ENCODE measurements at regions of chr1 and their contacts with region 1.

Region 1: GRCh38 chr1:89065079-89065868 is at the start of gene GBP1:
- DNase-seq: peak in 7 of 9 donors; percentile 34 to 56 (median 52)
- ATAC-seq: peak; percentile 88
- H3K4me3 ChIP-seq: peak within 1 kb of the TSS; percentile 56
- H3K4me3 Mint-ChIP-seq: peak within 1 kb of the TSS; percentile 89 to 97 (median 94)
- H3K27ac ChIP-seq: peak within 1 kb of the TSS; percentile 89
- H3K27ac Mint-ChIP-seq: peak within 1 kb of the TSS; percentile 90 to 98 (median 95)
- H3K4me1 ChIP-seq: peaks cover 15 to 26% of the 10 kb centered on the region in 2 donors
- H3K4me1 Mint-ChIP-seq: peaks cover 44 to 74% (median 62%) of the 10 kb centered on the region in 7 donors
- H3K27me3 ChIP-seq: no peaks in the 10 kb centered on the region
- H3K27me3 Mint-ChIP-seq: no peaks in the 10 kb centered on the region
- total RNA-seq, gene GBP1: 17.1 to 319 (median 51.9) TPM

Region 2: DNA sequence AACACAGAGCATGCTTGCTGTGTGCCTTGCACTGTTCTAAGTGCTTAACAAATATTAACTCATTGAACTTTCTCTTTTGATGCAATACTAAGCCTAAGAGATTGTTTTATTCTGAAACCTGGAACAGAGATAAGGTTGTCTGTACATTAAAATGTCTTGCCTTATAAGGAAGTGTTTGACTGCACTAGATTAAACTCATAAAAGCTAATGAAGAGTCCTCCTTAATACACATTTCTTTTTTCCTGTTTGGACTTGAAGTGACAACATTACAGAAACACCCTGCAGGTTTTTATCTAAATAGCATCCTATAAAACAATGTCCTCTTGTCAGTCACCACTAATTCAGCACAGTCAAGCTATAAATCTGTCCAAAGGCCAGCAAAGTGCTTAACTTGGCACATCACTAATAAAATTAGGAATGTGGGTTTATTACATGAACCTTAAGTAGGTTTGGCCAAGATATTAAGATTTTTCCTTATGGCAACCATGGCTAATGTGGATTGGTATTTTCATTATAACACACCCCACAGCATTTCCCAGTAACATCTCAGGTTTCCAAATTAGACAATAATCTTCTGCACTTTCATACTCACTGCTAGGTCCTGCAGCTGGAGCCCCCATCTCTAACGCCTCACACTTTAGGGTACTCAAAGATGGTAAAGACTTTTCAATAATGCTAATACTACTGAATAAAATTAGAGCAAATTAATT is 1346.9 kb before region 1 on chr1:
- CTCF ChIA-PET with region 1: no interaction called
- POLR2A ChIA-PET with region 1: no interaction called
- intact Hi-C with region 1: no loop called
- DNase-seq: no peak
- ATAC-seq: no peak
- H3K4me3 ChIP-seq: no peak overlapping the region
- H3K4me3 Mint-ChIP-seq: no peak overlapping the region
- H3K27ac ChIP-seq: no peak overlapping the region
- H3K27ac Mint-ChIP-seq: no peak overlapping the region
- H3K4me1 ChIP-seq: no peaks in the 10 kb centered on the region
- H3K4me1 Mint-ChIP-seq: no peaks in the 10 kb centered on the region
- H3K27me3 ChIP-seq: no peaks in the 10 kb centered on the region
- H3K27me3 Mint-ChIP-seq: peaks cover 0 to 5% (median 0%) of the 10 kb centered on the region in 5 donors

Region 3: GRCh38 chr1:88990426-88990825 is 74.8 kb before region 1 on chr1:
- CTCF ChIA-PET with region 1: interaction called, 3 read pairs
- POLR2A ChIA-PET with region 1: interaction called, 6 read pairs
- intact Hi-C with region 1: loop called in 1 of 2 experiments (anchors 1 kb)
- DNase-seq: no peak
- ATAC-seq: no peak
- H3K4me3 ChIP-seq: no peak overlapping the region
- H3K4me3 Mint-ChIP-seq: peak overlapping the region in 4 of 10 donors; percentile 1 to 42 (median 23)
- H3K27ac ChIP-seq: no peak overlapping the region
- H3K27ac Mint-ChIP-seq: peak overlapping the region in 6 of 9 donors; percentile 61 to 90 (median 78)
- H3K4me1 ChIP-seq: peaks cover 15 to 28% of the 10 kb centered on the region in 2 donors
- H3K4me1 Mint-ChIP-seq: peaks cover 24 to 56% (median 45%) of the 10 kb centered on the region in 7 donors
- H3K27me3 ChIP-seq: no peaks in the 10 kb centered on the region
- H3K27me3 Mint-ChIP-seq: no peaks in the 10 kb centered on the region

Region 4: GRCh38 chr1:89022167-89022959 is 42.9 kb before region 1 on chr1 and contains the start of gene GBP3:
- CTCF ChIA-PET with region 1: interaction called, 4 read pairs
- POLR2A ChIA-PET with region 1: interaction called, 29 read pairs
- intact Hi-C with region 1: loop called (anchors 1 kb)
- DNase-seq: peak in 7 of 9 donors; percentile 22 to 52 (median 41)
- ATAC-seq: peak; percentile 84
- H3K4me3 ChIP-seq: peak within 1 kb of the TSS; percentile 75
- H3K4me3 Mint-ChIP-seq: peak within 1 kb of the TSS; percentile 83 to 99 (median 95)
- H3K27ac ChIP-seq: peak within 1 kb of the TSS; percentile 84
- H3K27ac Mint-ChIP-seq: peak within 1 kb of the TSS; percentile 85 to 99 (median 93)
- H3K4me1 ChIP-seq: peaks cover 16 to 21% of the 10 kb centered on the region in 2 donors
- H3K4me1 Mint-ChIP-seq: peaks cover 30 to 58% (median 48%) of the 10 kb centered on the region in 7 donors
- H3K27me3 ChIP-seq: no peaks in the 10 kb centered on the region
- H3K27me3 Mint-ChIP-seq: no peaks in the 10 kb centered on the region
- total RNA-seq, gene GBP3: 15.9 to 39.9 (median 31.9) TPM

Region 5: DNA sequence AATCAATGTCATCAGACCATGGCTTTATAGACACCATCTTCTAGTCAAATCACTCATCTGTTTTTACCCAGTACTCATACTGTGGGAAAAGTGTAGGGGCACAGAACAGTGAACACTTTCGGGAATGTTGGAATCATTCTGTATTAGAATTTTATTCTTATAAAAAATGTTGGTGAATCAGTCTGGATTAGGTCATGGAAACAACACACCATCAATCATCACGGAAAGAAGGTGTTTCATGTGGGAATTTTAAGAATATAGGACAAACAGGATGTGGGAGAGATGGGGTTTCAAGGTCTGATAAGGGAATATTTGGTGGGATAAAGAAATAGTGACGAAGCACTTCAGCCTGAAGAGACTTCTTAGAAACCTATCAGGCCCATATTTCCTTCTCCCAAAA is 17.5 kb before region 1 on chr1:
- CTCF ChIA-PET with region 1: no interaction called
- POLR2A ChIA-PET with region 1: no interaction called
- intact Hi-C with region 1: no loop called
- DNase-seq: no peak
- ATAC-seq: no peak
- H3K4me3 ChIP-seq: no peak overlapping the region
- H3K4me3 Mint-ChIP-seq: no peak overlapping the region
- H3K27ac ChIP-seq: no peak overlapping the region
- H3K27ac Mint-ChIP-seq: peak overlapping the region in 3 of 9 donors; percentile 41 to 71 (median 43)
- H3K4me1 ChIP-seq: no peaks in the 10 kb centered on the region
- H3K4me1 Mint-ChIP-seq: peaks cover 0 to 15% (median 4%) of the 10 kb centered on the region in 7 donors
- H3K27me3 ChIP-seq: no peaks in the 10 kb centered on the region
- H3K27me3 Mint-ChIP-seq: no peaks in the 10 kb centered on the region

Region 6: DNA sequence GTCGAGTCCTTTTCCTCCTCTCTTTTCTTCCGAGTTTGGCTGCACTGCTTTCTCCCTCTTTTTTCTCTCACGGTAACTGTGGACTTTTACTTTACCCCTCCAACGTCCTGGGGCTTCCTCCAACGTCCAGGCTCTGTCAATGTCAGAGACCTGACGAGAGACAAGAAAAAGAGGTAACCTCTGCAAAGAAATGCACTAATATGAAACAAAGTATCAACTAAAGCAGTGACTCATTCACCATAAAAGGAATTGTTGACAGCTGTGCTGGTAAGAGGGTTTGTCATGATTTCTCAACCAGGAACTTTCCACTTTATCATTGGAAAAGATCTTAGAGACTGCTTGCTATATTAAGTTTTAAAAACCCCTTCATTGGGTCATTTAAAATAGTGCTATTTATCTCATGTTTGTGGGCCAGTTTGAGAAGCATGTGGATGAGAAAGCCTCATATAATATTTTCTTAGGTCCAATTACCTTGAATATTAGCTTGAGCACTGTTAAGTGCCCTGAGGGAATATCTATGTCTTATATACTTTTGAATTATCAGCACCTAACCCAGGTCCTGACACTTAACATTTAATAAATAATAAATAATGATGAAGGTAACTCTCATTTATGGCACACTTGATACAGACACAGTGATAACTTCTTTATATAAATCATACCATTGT is 60.8 kb after region 1 on chr1 and contains the start of gene GBP2:
- CTCF ChIA-PET with region 1: no interaction called
- POLR2A ChIA-PET with region 1: interaction called, 10 read pairs
- intact Hi-C with region 1: loop called (anchors 1 to 2 kb)
- DNase-seq: peak in 7 of 9 donors; percentile 35 to 72 (median 42)
- ATAC-seq: peak; percentile 82
- H3K4me3 ChIP-seq: peak within 1 kb of the TSS; percentile 84
- H3K4me3 Mint-ChIP-seq: peak within 1 kb of the TSS; percentile 88 to 100 (median 98)
- H3K27ac ChIP-seq: peak within 1 kb of the TSS; percentile 76
- H3K27ac Mint-ChIP-seq: peak within 1 kb of the TSS; percentile 94 to 100 (median 99)
- H3K4me1 ChIP-seq: peaks cover 30 to 32% of the 10 kb centered on the region in 2 donors
- H3K4me1 Mint-ChIP-seq: peaks cover 39 to 75% (median 63%) of the 10 kb centered on the region in 7 donors
- H3K27me3 ChIP-seq: no peaks in the 10 kb centered on the region
- H3K27me3 Mint-ChIP-seq: peaks cover 0 to 2% (median 0%) of the 10 kb centered on the region in 5 donors
- total RNA-seq, gene GBP2: 74.0 to 200 (median 185) TPM

Region 7: GRCh38 chr1:89804642-89805237 is 739.5 kb after region 1 on chr1:
- CTCF ChIA-PET with region 1: no interaction called
- POLR2A ChIA-PET with region 1: no interaction called
- intact Hi-C with region 1: no loop called
- DNase-seq: peak; percentile 64 to 83 (median 80)
- ATAC-seq: peak; percentile 98
- H3K4me3 ChIP-seq: no peak overlapping the region
- H3K4me3 Mint-ChIP-seq: no peak overlapping the region
- H3K27ac ChIP-seq: no peak overlapping the region
- H3K27ac Mint-ChIP-seq: no peak overlapping the region
- H3K4me1 ChIP-seq: no peaks in the 10 kb centered on the region
- H3K4me1 Mint-ChIP-seq: peaks cover 0 to 6% (median 0%) of the 10 kb centered on the region in 7 donors
- H3K27me3 ChIP-seq: no peaks in the 10 kb centered on the region
- H3K27me3 Mint-ChIP-seq: peaks cover 0 to 7% (median 0%) of the 10 kb centered on the region in 5 donors